ENCODE measurements at regions of chr15 and their contacts with region 1.

Region 1: DNA sequence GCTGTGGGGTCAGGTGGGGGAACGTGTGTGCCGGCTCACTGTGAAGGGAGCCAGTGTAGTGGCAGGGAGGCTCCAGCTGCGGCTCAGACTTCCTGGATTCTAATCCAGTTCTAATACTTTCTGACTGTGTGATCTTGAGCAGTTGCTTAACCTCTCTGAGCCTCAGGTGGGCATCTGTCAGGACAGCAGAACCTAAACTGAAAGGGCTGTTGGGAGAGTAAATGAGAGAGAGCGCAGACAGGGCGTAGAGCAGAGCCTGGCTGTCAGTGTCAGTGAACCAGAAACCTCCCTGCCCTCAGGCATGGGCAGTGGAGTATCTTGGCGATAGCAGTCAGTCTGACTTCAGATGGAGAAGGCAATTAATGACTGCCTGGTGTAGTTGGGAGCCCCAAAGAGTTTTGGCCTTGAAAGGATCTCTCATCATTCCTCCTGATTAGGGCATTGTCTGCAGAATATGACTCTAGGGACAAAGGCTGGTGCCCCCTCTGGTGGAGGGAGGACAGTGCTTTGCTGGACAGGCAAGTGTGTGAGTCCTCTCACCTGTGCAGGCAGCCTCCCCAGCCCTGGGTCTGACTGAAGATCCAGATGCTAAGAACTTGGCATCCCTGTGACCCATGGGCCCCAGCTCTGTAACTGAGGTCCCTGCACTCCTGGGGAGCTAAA is 9.6 kb downstream of the KBTBD13 start:
- DNase-seq: no peak
- ATAC-seq: no peak

Region 2: GRCh38 chr15:65054333-65055200 is 31.6 kb before region 1 on chr15:
- intact Hi-C with region 1: loop called (anchors 2 to 5 kb)
- DNase-seq: peak; percentile 77
- ATAC-seq: peak; percentile 67 to 81